ENCODE measurements at regions of chr1 and their contacts with region 1.

Region 1: DNA sequence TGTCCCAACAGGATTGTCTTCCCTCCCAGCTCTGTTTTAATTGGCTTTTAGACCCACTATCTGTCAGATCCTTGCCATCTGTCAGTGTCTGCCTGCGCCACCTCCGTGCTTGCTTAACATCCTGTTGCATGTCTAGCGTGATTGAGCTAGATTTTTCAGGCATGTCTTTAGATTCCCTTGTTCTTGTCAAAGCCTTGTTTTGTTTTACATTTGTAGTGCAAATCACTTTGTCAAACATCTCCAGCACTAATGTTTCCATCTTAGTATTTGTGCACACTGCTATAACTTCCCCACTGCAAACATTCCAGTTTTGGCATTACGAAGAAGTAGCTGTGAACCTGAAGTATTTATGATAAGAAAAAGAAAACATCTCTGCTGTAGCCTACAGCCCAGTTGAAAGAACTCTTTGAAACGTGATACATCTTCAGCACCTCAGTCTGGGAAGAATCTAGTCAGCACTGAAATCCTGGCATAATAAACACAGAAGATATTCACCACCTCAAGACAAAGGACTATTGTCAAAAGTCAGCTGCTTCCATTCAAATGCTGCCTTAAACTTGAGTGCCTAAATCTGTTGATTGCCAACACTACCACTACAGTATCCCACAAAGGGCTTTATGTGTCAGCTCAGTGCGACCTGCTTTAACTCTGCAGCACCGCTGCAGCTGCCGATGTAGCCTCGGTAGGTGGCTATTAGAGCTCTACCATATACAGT is 105.0 kb downstream of the FNBP1L start:
- DNase-seq: no peak
- H3K4me3 ChIP-seq: no peak overlapping the region
- H3K27ac ChIP-seq: peak overlapping the region in 1 of 2 donors; percentile 13
- H3K4me1 ChIP-seq: no peaks in the 10 kb centered on the region
- H3K27me3 ChIP-seq: no peaks in the 10 kb centered on the region
- CTCF ChIP-seq: no peak

Region 2: GRCh38 chr1:93304716-93305138 is 248.2 kb before region 1 on chr1:
- intact Hi-C with region 1: loop called (anchors 10 kb)
- DNase-seq: peak in 1 of 2 donors; percentile 69
- H3K4me3 ChIP-seq: no peak overlapping the region
- H3K27ac ChIP-seq: no peak overlapping the region
- H3K4me1 ChIP-seq: no peaks in the 10 kb centered on the region
- H3K27me3 ChIP-seq: no peaks in the 10 kb centered on the region
- CTCF ChIP-seq: peak; percentile 39 to 90 (median 84)

Region 3: GRCh38 chr1:93447516-93448291 is 105.2 kb before region 1 on chr1 and contains the start of gene FNBP1L:
- intact Hi-C with region 1: loop called (anchors 10 kb)
- DNase-seq: peak in 1 of 2 donors; percentile 80
- H3K4me3 ChIP-seq: peak within 1 kb of the TSS; percentile 93 to 95
- H3K27ac ChIP-seq: peak within 1 kb of the TSS; percentile 59 to 66
- H3K4me1 ChIP-seq: peaks cover 0 to 3% of the 10 kb centered on the region in 2 donors
- H3K27me3 ChIP-seq: no peaks in the 10 kb centered on the region
- CTCF ChIP-seq: no peak
- total RNA-seq, gene FNBP1L: 12.6 TPM